H1 (cell line): ENCODE measurements at regions of chr17 and their contacts with region 1.

Region 1: DNA sequence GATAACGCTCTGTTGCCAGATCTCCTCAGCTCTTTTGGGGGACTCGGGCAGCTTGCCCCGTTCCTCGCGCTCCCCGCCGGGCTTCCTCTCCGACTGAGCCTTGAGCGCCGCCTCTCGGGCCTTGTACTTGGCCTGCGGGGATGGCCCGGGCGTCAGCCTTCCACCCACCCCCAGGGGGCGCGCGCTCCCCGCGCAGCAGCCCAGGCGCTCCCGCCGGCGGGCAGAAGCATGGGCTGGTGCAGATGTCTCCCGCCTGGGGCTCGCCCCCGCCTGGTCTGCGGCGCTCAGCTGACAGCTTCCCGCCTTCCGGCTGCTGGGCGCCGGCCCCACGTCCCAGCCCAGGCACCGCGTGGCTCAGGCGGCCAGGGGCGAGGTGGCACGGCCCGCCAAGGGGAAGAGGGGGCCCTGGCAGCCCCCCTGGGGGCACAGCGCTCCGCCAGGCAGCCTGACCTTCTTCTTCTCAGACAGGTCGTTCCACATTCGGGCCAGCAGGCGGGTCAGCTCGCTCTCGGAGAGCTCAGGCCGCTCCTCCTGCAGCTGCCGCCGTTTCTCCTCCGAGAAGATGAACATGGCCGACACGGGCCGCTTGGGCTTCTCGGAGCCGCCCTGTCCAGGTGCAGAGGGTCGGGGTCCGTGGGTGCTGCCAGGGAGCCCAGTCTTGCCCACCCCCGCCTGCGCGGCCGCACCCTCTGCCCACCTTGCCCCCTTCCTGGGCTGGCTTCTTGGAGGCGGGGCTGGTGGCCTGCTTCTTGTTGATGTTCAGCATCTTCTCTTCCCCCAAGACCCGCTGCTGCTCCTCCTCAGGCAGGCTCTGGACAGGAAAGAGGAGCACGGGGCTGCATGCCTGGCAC is 8.9 kb downstream of the UBTF start:
- DNase-seq: peak; percentile 85 to 97
- H3K4me3 ChIP-seq: no peak overlapping the region
- H3K27ac ChIP-seq: peak overlapping the region; percentile 45; the same call in 1 of the 2 replicates
- H3K4me1 ChIP-seq: peaks cover 0 to 11% (median 3%) of the 10 kb centered on the region in 4 experiments; a peak in 5 of 7 replicates
- H3K27me3 ChIP-seq: no peaks in the 10 kb centered on the region
- CTCF ChIP-seq: peak; percentile 82 to 99 (median 95)
- EP300 ChIP-seq: 0 out of 3 replicates have a peak, but pooled peaks of 1 of the 2 experiments have one; percentile 16
- POLR2A ChIP-seq: peak in 1 of 2 experiments; percentile 19; a peak in 1 of 3 replicates
- RAD21 ChIP-seq: peak; percentile 89 to 96

Region 2: GRCh38 chr17:44130693-44131349 is 79.7 kb before region 1 on chr17:
- CTCF ChIA-PET with region 1: no interaction called
- POLR2A ChIA-PET with region 1: no interaction called
- DNase-seq: no peak
- H3K4me3 ChIP-seq: no peak overlapping the region
- H3K27ac ChIP-seq: no peak overlapping the region
- H3K4me1 ChIP-seq: no peaks in the 10 kb centered on the region
- H3K27me3 ChIP-seq: no peaks in the 10 kb centered on the region
- CTCF ChIP-seq: no peak
- EP300 ChIP-seq: no peak
- POLR2A ChIP-seq: no peak
- RAD21 ChIP-seq: no peak

Region 3: GRCh38 chr17:44223541-44224071 is 13.0 kb after region 1 on chr17:
- CTCF ChIA-PET with region 1: interaction called, 15 read pairs
- POLR2A ChIA-PET with region 1: interaction called, 16 read pairs
- DNase-seq: no peak
- H3K4me3 ChIP-seq: no peak overlapping the region
- H3K27ac ChIP-seq: no peak overlapping the region
- H3K4me1 ChIP-seq: peaks cover 0 to 8% (median 3%) of the 10 kb centered on the region in 4 experiments; a peak in 5 of 7 replicates
- H3K27me3 ChIP-seq: no peaks in the 10 kb centered on the region
- CTCF ChIP-seq: no peak
- EP300 ChIP-seq: no peak
- POLR2A ChIP-seq: no peak; a peak in 1 of 3 replicates
- RAD21 ChIP-seq: no peak

Region 4: DNA sequence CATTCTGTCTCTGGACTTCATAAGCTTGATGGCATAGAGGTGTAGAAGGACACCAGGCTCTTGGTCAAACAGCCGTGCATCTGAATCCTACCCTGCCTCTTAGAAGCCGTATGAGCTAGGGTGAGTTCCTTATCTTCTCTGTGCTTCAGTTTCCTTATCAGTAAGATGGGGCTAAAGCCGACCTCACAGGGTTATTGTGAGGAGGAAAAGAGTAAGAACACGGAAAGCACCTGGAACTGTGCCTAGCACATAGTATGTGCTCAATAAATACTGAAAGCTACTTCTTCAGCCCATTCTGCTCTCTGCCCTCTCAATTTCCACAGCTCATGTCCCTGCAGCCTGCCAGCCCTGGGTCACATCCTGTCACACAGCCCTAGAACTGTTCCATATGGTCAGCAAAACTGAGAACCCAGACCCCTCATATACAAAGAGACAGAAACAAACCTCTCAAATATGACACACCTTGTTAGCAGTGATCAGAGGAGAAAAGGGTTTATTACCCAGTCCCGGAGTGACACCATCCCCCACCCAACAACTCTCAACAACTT is 26.0 kb after region 1 on chr17:
- CTCF ChIA-PET with region 1: no interaction called
- POLR2A ChIA-PET with region 1: no interaction called
- DNase-seq: no peak
- H3K4me3 ChIP-seq: no peak overlapping the region
- H3K27ac ChIP-seq: no peak overlapping the region
- H3K4me1 ChIP-seq: no peaks in the 10 kb centered on the region
- H3K27me3 ChIP-seq: no peaks in the 10 kb centered on the region
- CTCF ChIP-seq: no peak
- EP300 ChIP-seq: no peak
- POLR2A ChIP-seq: no peak
- RAD21 ChIP-seq: no peak

Region 5: DNA sequence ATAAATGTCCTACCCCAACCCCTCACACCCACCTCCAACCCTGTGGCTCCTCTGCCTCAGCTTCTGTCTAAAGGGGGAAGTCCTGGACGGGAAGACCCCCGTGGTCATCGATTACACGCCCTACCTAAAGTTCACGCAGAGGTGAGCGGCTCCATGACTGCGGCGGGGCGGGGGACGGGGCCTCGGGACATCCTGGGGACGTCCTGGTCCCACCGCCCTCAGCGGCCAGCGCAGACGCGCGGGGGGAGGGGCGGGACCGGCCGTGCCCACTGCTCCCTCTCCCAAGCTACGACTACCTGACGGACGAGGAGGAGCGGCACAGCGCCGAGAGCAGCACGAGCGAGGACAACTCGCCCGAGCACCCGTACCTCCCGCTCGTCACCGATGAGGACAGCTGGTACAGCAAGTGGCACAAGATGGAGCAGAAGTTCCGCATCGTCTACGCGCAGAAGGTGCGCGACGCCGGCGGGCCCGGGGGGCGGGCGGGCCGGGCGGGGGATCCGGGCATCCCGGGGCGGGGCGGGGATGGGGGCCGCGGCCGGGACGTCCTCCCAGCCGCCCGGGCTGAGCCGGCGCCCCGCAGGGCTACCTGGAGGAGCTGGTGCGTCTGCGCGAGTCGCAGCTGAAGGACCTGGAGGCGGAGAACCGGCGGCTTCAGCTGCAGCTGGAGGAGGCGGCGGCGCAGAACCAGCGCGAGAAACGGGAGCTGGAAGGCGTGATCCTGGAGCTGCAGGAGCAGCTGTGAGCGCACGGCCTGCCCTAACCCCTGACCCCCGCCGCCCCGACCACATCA is 104.5 kb after region 1 on chr17:
- CTCF ChIA-PET with region 1: interaction called, 42 read pairs
- POLR2A ChIA-PET with region 1: interaction called, 135 read pairs
- DNase-seq: peak in 1 of 2 experiments; percentile 81
- H3K4me3 ChIP-seq: peak overlapping the region; percentile 40 to 67 (median 60)
- H3K27ac ChIP-seq: no peak overlapping the region
- H3K4me1 ChIP-seq: peaks cover 7 to 36% (median 29%) of the 10 kb centered on the region in 4 experiments
- H3K27me3 ChIP-seq: peaks cover 0 to 19% (median 17%) of the 10 kb centered on the region in 4 experiments; a peak in 6 of 7 replicates
- CTCF ChIP-seq: no peak
- EP300 ChIP-seq: no peak
- POLR2A ChIP-seq: no peak
- RAD21 ChIP-seq: no peak

Region 6: GRCh38 chr17:44331249-44331760 is 120.7 kb after region 1 on chr17:
- CTCF ChIA-PET with region 1: interaction called, 158 read pairs
- POLR2A ChIA-PET with region 1: interaction called, 9 read pairs
- DNase-seq: peak in 1 of 2 experiments; percentile 86
- H3K4me3 ChIP-seq: no peak overlapping the region
- H3K27ac ChIP-seq: no peak overlapping the region
- H3K4me1 ChIP-seq: peaks cover 0 to 2% (median 2%) of the 10 kb centered on the region in 4 experiments; a peak in 4 of 7 replicates
- H3K27me3 ChIP-seq: peaks cover 0 to 2% (median under 1%) of the 10 kb centered on the region in 4 experiments; a peak in 3 of 7 replicates
- CTCF ChIP-seq: peak; percentile 53 to 79 (median 77)
- EP300 ChIP-seq: no peak
- POLR2A ChIP-seq: no peak
- RAD21 ChIP-seq: peak; percentile 66 to 73

Region 7: DNA sequence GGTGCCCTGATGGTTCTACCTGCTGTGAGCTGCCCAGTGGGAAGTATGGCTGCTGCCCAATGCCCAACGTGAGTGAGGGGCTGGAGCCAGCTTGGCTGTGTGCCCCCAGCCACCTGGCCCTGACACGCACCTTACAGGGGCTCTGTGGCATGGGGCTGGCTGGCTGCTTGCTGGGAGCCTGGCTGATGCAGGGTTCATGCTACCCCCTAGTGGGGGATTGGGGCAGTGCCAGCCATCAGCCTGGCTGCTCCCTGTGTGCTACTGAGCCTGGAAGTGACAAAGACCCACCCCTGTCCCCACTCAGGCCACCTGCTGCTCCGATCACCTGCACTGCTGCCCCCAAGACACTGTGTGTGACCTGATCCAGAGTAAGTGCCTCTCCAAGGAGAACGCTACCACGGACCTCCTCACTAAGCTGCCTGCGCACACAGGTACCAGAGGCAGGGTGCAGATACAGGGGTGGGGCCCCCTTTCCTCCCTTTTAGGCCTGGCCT is 140.2 kb after region 1 on chr17:
- CTCF ChIA-PET with region 1: interaction called, 31 read pairs
- POLR2A ChIA-PET with region 1: interaction called, 21 read pairs
- DNase-seq: peak in 1 of 2 experiments; percentile 90
- H3K4me3 ChIP-seq: no peak overlapping the region
- H3K27ac ChIP-seq: no peak overlapping the region
- H3K4me1 ChIP-seq: peaks cover 0 to 8% (median 4%) of the 10 kb centered on the region in 4 experiments; a peak in 4 of 7 replicates
- H3K27me3 ChIP-seq: no peaks in the 10 kb centered on the region; a peak in 2 of 7 replicates
- CTCF ChIP-seq: peak; percentile 82 to 95 (median 90)
- EP300 ChIP-seq: no peak
- POLR2A ChIP-seq: no peak
- RAD21 ChIP-seq: peak; percentile 81 to 82

Region 8: GRCh38 chr17:44376124-44376523 is 165.6 kb after region 1 on chr17:
- CTCF ChIA-PET with region 1: interaction called, 12 read pairs
- POLR2A ChIA-PET with region 1: no interaction called
- DNase-seq: peak in 1 of 2 experiments; percentile 87
- H3K4me3 ChIP-seq: no peak overlapping the region
- H3K27ac ChIP-seq: no peak overlapping the region
- H3K4me1 ChIP-seq: peaks cover 4 to 20% (median 14%) of the 10 kb centered on the region in 4 experiments; a peak in 6 of 7 replicates
- H3K27me3 ChIP-seq: no peaks in the 10 kb centered on the region; a peak in 1 of 7 replicates
- CTCF ChIP-seq: peak; percentile 76 to 81 (median 79)
- EP300 ChIP-seq: no peak
- POLR2A ChIP-seq: no peak
- RAD21 ChIP-seq: peak in 1 of 2 experiments; percentile 33; a peak in 2 of 4 replicates